ENCODE measurements at regions of chr1 and their contacts with region 1.

Region 1: DNA sequence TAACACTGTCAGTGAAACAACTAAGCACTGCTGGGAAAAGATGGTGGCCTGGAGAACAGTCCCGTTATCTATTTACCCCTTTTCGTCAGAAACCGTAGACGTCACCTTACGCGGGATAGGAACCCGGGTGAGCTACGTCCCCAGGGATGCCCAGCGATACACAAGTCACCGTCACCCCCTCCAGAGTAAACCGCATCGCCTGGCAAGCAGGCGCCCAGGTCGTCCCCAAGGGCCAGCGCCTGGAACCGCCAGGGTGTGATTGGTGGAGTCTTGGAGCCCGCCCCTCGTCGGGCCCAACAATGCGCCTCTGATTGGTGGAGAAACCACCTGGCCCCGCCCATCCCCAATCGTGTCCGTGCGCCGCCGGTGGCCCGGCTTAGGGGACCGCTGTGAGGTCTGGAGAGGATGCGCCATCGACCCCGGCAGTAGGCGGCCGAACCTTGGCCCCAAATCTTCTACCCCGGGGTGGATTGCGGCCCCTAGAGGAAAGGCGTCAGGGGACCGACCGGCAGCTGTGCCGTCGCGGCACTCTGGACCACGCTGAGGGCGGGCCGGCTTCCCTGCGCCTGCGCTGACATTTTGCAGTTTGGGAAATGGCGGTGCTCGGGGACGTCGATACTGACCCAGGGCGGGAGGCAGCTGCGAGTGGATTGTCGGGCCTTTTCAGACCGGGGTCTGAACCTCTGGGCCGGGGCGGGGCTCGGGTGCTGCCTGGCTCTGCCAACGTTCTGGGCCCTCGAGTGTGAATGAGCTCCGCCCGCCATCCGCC is 34.4 kb downstream of the SLC2A1 start:
- DNase-seq: peak; percentile 99
- H3K4me3 ChIP-seq: peak overlapping the region; percentile 66 to 96 (median 86)
- H3K27ac ChIP-seq: peak overlapping the region; percentile 92 to 98 (median 94)
- H3K4me1 ChIP-seq: peaks cover 5 to 20% (median 16%) of the 10 kb centered on the region in 4 donors
- H3K27me3 ChIP-seq: no peaks in the 10 kb centered on the region
- CTCF ChIP-seq: peak in 1 of 3 experiments; percentile 34
- EP300 ChIP-seq: no peak
- POLR2A ChIP-seq: peak; percentile 33

Region 2: DNA sequence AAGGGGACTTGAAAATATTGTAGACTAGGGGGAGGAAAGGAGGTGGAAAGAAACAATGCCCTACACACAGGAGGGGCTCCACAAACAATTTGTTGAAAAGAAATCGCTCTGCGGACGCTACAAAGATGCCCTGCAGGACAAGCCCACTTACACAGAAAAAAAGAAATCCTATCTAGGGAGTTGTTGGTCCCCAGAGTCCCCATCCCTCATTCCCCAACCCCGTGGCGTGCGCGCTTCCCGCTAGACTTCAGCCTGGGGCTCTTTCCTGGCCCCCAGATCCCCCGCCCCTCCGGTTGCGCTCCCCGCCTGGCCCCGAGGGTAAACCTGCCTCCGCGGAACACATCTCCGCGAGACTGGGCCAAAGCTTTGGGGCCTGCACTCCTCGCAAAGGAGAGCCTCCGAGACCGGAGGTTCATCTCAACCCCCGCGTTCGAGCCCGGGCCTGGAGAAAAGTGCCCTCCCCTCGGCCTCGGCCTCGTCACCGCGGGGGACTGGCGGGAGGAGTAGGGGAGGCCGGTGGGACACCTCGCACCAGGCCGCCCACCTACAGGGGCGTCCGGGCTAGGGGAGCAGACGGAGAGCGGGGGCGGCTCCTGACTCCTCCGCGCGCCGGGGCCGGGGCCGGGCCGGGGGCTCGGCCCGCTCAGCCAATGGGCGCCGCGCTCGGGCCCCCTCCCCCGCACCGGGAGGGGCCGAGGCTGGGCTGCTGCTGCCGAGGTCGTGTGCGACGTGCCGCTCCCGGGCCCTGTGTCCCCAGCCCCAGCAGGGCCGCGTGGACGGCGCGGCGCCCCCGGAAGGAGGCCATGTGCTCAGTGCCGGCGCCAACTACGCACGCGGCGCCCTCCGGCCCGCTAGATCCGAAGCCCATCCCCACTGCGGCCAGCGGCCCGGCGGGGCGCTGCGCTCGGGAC is 33.6 kb after region 1 on chr1:
- intact Hi-C with region 1: loop called (anchors 2 kb)
- DNase-seq: no peak
- H3K4me3 ChIP-seq: peak overlapping the region; percentile 68 to 95 (median 80)
- H3K27ac ChIP-seq: peak overlapping the region; percentile 89 to 97 (median 96)
- H3K4me1 ChIP-seq: peaks cover 31 to 72% (median 48%) of the 10 kb centered on the region in 4 donors
- H3K27me3 ChIP-seq: no peaks in the 10 kb centered on the region
- CTCF ChIP-seq: peak in 1 of 3 experiments; percentile 6
- EP300 ChIP-seq: no peak
- POLR2A ChIP-seq: no peak